HCT116 (cell line): ENCODE measurements at regions of chr6 and their contacts with region 1.

Region 1: GRCh38 chr6:42726485-42727086 is 4.2 kb upstream of the PRPH2 start:
- DNase-seq: peak; percentile 75
- ATAC-seq: peak; percentile 93
- H3K4me3 ChIP-seq: no peak overlapping the region
- H3K27ac ChIP-seq: no peak overlapping the region
- H3K4me1 ChIP-seq: peaks cover 4 to 9% of the 10 kb centered on the region in 2 experiments; a peak in 3 of 4 replicates
- H3K27me3 ChIP-seq: no peaks in the 10 kb centered on the region
- CTCF ChIP-seq: peak; percentile 87 to 94 (median 90)
- POLR2A ChIP-seq: no peak
- RAD21 ChIP-seq: peak; percentile 98

Region 2: DNA sequence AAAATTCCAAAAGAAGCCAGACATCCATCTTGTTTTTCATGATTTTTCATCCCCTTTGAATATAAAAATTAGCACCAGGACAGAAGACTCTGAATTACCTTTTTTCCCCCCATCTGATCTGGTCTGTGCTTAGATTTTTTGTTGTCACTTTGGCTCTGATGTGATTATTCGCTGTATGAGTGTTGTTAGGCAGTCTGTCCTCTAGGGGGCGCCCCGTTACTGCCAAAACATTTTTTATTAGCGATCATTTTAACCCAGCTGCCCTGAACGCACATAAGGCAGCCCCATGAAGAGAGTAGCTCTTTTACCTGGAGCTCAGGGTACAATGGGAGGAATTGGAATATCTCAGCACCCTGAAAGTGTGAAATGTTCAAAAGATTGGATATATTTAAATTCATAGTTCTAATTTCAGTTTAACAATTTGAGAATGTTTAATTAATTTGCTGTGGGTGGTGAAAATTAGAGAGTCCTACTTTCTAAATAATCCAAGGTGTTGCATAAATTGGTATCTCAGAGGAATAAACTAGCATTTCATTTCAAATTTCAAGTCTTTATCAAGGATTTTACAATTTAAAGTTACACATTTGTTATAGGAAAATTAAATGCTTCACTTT is 64.9 kb before region 1 on chr6:
- CTCF ChIA-PET with region 1: interaction called, 38 read pairs
- POLR2A ChIA-PET with region 1: no interaction called
- RAD21 ChIA-PET with region 1: interaction called, 4 read pairs
- intact Hi-C with region 1: loop called (anchors 1 kb)
- DNase-seq: peak; percentile 50
- ATAC-seq: peak; percentile 88
- H3K4me3 ChIP-seq: no peak overlapping the region
- H3K27ac ChIP-seq: no peak overlapping the region
- H3K4me1 ChIP-seq: peaks cover 0 to 2% of the 10 kb centered on the region in 2 experiments; a peak in 2 of 4 replicates
- H3K27me3 ChIP-seq: no peaks in the 10 kb centered on the region
- CTCF ChIP-seq: peak; percentile 81 to 94 (median 87); a peak in 5 of 6 replicates
- POLR2A ChIP-seq: no peak
- RAD21 ChIP-seq: peak; percentile 92

Region 3: DNA sequence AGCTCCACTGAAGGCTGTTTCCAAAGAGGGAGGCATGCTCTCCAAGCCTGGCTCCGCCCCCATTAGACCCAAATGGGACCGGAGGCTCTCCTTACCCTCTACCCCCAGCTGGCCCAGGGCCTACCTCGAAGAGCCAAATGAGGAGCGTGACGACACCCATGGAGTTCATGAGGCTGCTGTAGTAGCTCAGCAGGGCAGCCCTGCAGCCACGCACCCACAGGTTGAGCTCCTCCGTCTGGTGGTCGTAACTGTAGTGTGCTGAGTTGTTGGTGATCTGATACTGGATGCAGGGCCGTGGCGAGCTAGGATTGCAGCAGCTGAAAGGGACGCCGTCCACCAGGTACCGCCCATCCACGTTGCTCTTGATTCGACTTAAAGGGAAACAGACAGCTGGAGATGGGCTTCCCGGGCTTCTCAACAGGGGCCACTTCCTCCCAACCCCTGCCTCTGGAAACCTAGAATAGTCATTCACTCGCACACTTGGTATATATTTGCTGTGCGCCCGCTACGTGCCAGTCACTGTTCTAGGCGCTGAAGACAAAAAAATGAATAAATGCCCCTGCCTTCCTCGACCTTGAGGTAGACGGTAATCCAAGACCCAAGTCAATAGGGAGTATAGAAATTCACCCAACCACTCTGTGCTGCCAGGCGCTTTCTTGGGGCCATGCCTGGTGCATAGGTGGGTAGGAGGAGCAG is 22.2 kb before region 1 on chr6:
- CTCF ChIA-PET with region 1: no interaction called
- POLR2A ChIA-PET with region 1: no interaction called
- RAD21 ChIA-PET with region 1: no interaction called
- intact Hi-C with region 1: no loop called
- DNase-seq: no peak
- ATAC-seq: no peak
- H3K4me3 ChIP-seq: no peak overlapping the region
- H3K27ac ChIP-seq: no peak overlapping the region
- H3K4me1 ChIP-seq: peaks cover 0 to 15% of the 10 kb centered on the region in 2 experiments; a peak in 2 of 4 replicates
- H3K27me3 ChIP-seq: no peaks in the 10 kb centered on the region
- CTCF ChIP-seq: no peak
- POLR2A ChIP-seq: no peak
- RAD21 ChIP-seq: no peak

Region 4: GRCh38 chr6:43150051-43150751 is 423.6 kb after region 1 on chr6:
- CTCF ChIA-PET with region 1: no interaction called
- POLR2A ChIA-PET with region 1: no interaction called
- RAD21 ChIA-PET with region 1: no interaction called
- intact Hi-C with region 1: no loop called
- DNase-seq: no peak
- ATAC-seq: no peak
- H3K4me3 ChIP-seq: no peak overlapping the region
- H3K27ac ChIP-seq: no peak overlapping the region
- H3K4me1 ChIP-seq: no peaks in the 10 kb centered on the region
- H3K27me3 ChIP-seq: no peaks in the 10 kb centered on the region
- CTCF ChIP-seq: no peak
- POLR2A ChIP-seq: no peak
- RAD21 ChIP-seq: no peak